OCI-LY7 (cell line): ENCODE measurements at regions of chr2 and their contacts with region 1.

Region 1: GRCh38 chr2:206159346-206160124 is at the starts of genes EEF1B2 and NDUFS1:
- DNase-seq: peak; percentile 99
- H3K4me3 ChIP-seq: peak within 1 kb of the TSS; percentile 96
- H3K27ac ChIP-seq: peak within 1 kb of the TSS; percentile 75
- H3K4me1 ChIP-seq: peaks cover 44% of the 10 kb centered on the region
- CTCF ChIP-seq: no peak
- total RNA-seq, gene EEF1B2: 883 and 1,168 TPM in 2 replicates
- total RNA-seq, gene NDUFS1: 73.4 and 81.9 TPM in 2 replicates

Region 2: DNA sequence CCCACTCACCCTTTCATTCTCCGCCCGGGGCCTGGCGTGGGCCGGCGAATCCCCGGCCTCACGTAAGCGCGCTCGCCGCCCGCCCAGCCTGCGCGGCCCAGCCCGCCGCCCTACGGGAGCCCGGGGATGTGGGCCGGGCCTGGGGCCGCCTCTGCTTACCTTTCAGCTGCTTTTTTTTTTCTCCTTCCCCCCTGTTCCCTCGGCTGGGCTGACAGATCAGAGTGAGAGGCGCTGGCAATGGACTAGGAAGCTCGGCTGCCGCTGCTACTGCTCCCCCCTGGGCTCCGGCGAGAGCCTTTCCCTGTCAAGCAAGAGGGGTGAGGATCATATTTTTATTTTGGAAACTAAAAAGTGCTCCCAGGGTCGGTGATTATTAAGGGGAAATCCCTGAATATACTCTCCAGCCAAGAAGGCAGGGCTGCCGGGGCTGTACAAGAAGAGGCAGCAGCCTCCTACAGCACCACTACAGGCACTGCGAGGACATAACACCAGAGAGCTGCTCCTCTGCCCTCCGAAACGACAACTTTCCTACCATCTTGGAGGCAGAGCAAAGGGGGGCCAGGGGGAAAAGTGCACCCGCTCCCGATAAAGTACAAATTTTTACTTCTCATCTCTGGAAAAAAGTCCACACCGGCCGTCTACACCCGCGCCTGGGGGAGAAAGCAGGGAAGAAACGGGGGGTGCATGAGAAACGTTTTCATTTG is 73.6 kb before region 1 on chr2 and contains the start of gene INO80D:
- CTCF ChIA-PET with region 1: no interaction called
- POLR2A ChIA-PET with region 1: interaction called, 8 read pairs
- intact Hi-C with region 1: loop called (anchors 1 kb)
- DNase-seq: peak; percentile 89
- H3K4me3 ChIP-seq: peak within 1 kb of the TSS; percentile 92
- H3K27ac ChIP-seq: peak within 1 kb of the TSS; percentile 94
- H3K4me1 ChIP-seq: peaks cover 29% of the 10 kb centered on the region
- CTCF ChIP-seq: peak; percentile 75
- total RNA-seq, gene INO80D: 8.2 and 14.2 TPM in 2 replicates

Region 3: DNA sequence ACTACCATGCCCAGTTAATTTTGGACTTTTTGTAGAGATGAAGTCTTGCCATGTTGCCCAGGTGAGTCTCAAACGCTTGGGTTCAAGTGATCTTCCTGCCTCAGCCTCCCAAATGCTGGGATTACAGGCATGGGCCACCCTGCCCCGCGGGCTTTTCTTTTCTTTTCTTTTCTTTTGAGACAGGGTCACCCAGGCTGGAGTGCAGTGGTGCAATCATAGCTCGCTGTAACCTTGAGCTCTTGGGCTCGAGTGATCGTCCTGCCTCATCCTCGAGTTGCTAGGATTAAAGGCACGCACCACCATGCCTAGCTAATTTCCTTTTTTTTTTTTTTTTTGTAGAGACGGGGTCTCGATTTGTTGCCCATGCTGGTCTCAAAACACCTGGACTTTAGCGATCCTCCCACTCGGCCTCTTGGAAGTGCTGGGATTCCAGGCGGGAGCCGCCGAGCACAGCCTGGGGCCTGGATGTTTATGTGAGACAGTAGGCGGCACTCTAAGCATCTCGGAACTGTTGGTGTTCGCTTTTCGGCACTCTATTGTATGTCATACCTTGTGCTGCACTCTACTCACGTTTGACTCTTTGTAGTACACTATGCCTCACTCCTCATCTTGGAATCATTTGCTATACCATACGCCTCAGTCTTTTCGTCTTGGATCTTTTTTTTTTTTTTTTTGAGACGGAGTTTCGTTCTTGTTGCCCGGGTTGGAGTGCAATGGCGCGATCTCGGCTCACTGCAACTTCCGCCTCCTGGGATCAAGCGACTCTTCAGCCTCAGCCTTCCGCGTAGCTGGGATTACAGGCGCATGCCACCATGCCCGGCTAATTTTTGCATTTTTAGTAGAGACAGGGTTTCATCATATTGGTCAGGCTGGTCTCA is 90.4 kb after region 1 on chr2:
- CTCF ChIA-PET with region 1: no interaction called
- POLR2A ChIA-PET with region 1: interaction called, 5 read pairs
- intact Hi-C with region 1: loop called (anchors 1 kb)
- DNase-seq: peak; percentile 13
- H3K4me3 ChIP-seq: no peak overlapping the region
- H3K27ac ChIP-seq: no peak overlapping the region
- H3K4me1 ChIP-seq: peaks cover 25% of the 10 kb centered on the region
- CTCF ChIP-seq: 0 out of 2 replicates have a peak, but pooled peaks have one; percentile 27

Region 4: GRCh38 chr2:206260188-206261012 is 100.9 kb after region 1 on chr2:
- CTCF ChIA-PET with region 1: interaction called, 3 read pairs
- POLR2A ChIA-PET with region 1: interaction called, 4 read pairs
- intact Hi-C with region 1: loop called (anchors 1 kb)
- DNase-seq: peak; percentile 70
- H3K4me3 ChIP-seq: no peak overlapping the region
- H3K27ac ChIP-seq: no peak overlapping the region
- H3K4me1 ChIP-seq: peaks cover 19% of the 10 kb centered on the region
- CTCF ChIP-seq: peak; percentile 79

Region 5: DNA sequence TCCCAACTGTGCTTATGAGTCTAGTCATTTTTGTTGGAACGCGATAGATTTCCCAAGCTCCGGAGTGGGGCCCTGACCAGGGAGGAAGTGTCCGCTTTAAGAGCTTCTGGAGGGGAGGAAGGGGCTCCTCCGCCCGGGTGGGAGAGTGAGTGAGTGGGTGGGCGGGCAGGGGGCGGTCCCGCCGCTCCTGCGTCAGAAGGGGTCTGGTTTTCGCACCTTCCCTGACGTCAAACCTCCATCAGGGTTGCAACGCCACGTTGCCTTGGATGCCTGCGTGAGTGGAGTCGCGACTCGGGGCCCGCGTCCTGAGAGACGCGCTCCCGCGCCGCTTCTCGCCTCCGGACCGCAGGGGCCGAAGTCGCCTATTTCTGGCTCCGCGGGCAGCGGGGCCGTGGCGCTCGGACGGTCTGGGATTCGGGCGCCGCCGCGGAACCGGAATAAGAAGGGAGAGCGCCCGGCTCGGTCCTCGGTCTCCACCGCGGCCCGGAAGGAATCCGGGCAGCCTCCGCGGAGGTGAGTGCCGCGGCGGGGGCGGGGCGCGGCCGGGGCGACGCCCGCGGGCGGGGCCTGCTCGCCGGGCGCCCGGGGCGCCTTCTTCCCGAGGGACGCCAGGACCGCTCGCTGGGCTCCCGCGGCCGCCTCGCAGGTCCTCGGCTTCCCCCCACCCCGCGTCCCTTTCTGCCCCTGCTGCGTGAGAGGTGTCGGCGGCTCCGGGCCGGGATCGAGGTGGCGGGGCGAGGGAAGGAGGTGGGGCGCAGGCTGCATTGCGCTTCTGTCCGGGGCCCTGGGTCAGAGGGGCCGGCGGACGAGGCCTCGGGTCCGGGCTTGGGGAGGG is 115.1 kb after region 1 on chr2 and contains the start of gene ZDBF2:
- CTCF ChIA-PET with region 1: no interaction called
- POLR2A ChIA-PET with region 1: interaction called, 4 read pairs
- intact Hi-C with region 1: loop called (anchors 2 kb)
- DNase-seq: peak; percentile 69
- H3K4me3 ChIP-seq: peak within 1 kb of the TSS; percentile 74
- H3K27ac ChIP-seq: peak within 1 kb of the TSS; percentile 42
- H3K4me1 ChIP-seq: peaks cover 37% of the 10 kb centered on the region
- CTCF ChIP-seq: no peak
- total RNA-seq, gene ZDBF2: 13.9 and 14.0 TPM in 2 replicates

Region 6: GRCh38 chr2:206765242-206766056 is 605.9 kb after region 1 on chr2 and contains the starts of genes FASTKD2 and MDH1B:
- CTCF ChIA-PET with region 1: no interaction called
- POLR2A ChIA-PET with region 1: no interaction called
- intact Hi-C with region 1: loop called (anchors 10 kb)
- DNase-seq: peak; percentile 90
- H3K4me3 ChIP-seq: peak within 1 kb of the TSS; percentile 77
- H3K27ac ChIP-seq: peak within 1 kb of the TSS; percentile 60
- H3K4me1 ChIP-seq: peaks cover 19% of the 10 kb centered on the region
- CTCF ChIP-seq: no peak
- total RNA-seq, gene FASTKD2: 17.0 and 18.3 TPM in 2 replicates
- total RNA-seq, gene MDH1B: 0.23 and 0.28 TPM in 2 replicates